AG04450 (cell line): ENCODE measurements at regions of chr16 and their contacts with region 1.

Region 1: GRCh38 chr16:74724820-74725549 is 24.3 kb upstream of the MLKL start:
- DNase-seq: peak; percentile 44
- H3K4me3 ChIP-seq: no peak overlapping the region
- H3K27ac ChIP-seq: peak overlapping the region; percentile 11
- H3K27me3 ChIP-seq: no peaks in the 10 kb centered on the region
- CTCF ChIP-seq: peak; percentile 54

Region 2: GRCh38 chr16:74666425-74667254 is 58.3 kb before region 1 on chr16 and contains the start of gene RFWD3:
- CTCF ChIA-PET with region 1: interaction called, 4 read pairs
- POLR2A ChIA-PET with region 1: interaction called, 12 read pairs
- DNase-seq: peak; percentile 96
- H3K4me3 ChIP-seq: peak within 1 kb of the TSS; percentile 87
- H3K27ac ChIP-seq: peak within 1 kb of the TSS; percentile 73
- H3K27me3 ChIP-seq: no peaks in the 10 kb centered on the region
- CTCF ChIP-seq: no peak
- polyA plus RNA-seq, gene RFWD3: 10.7 and 13.4 TPM in 2 replicates

Region 3: GRCh38 chr16:74743668-74744299 is 18.8 kb after region 1 on chr16:
- CTCF ChIA-PET with region 1: interaction called, 14 read pairs
- POLR2A ChIA-PET with region 1: interaction called, 4 read pairs
- DNase-seq: peak; percentile 20
- H3K4me3 ChIP-seq: no peak overlapping the region
- H3K27ac ChIP-seq: no peak overlapping the region
- H3K27me3 ChIP-seq: no peaks in the 10 kb centered on the region
- CTCF ChIP-seq: no peak

Region 4: GRCh38 chr16:74760007-74760767 is 35.2 kb after region 1 on chr16:
- CTCF ChIA-PET with region 1: no interaction called
- POLR2A ChIA-PET with region 1: no interaction called
- DNase-seq: peak; percentile 13
- H3K4me3 ChIP-seq: no peak overlapping the region
- H3K27ac ChIP-seq: no peak overlapping the region
- H3K27me3 ChIP-seq: peaks cover 8% of the 10 kb centered on the region
- CTCF ChIP-seq: no peak